Activated B cell treated with CpG ODN at 0.5 μM for 24 hours (primary cell): ENCODE measurements at regions of chrX and their contacts with region 1.

Region 1: DNA sequence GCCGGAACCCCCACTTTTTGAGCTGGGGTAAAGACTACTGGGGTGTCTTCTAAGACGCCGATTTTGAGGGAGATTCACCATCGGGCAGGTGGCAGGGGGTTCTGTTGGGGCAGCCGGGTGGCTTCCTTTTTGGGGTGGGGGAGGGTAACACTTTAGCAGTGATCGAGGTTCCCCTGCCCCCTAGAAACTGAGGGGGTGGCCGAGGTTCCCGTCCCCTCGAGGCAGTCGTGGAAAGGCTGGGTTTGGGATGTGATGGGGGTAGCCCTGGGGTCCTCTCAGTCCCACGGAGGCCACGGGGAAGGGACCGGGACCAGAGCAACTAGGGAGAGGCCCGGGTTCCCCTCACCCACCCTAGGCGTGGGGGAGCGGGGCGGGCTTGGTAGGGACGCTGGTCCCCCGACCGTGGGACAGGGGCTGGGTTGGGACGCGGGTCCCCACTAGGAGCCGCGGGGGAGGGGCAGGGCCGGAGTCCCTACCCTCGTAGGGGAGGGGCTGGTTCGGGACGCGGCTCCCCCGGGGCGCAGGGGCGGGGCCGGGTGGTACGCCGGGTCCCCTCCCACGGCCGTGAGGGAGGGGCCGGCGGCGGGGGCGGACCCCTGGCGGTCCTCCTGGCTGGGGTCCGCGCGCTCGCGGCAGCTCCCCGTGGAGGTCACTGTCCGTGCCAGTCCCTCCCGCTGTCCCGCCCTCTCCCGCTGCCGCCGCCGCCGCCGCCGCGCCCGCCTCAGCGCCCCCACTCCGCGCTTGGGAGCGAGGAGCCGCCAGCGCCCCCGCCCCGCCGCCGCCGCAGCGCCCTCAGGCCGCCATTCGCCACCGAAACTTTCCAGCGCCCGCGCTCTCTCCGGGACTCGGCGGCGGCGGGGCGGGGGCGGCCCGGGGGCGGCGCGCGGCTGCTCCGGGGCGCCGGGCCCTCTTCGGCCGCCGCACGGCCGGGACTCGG is at the start of gene TBL1X:
- DNase-seq: peak; percentile 66
- ATAC-seq: peak; percentile 70
- H3K4me3 Mint-ChIP-seq: peak within 1 kb of the TSS; percentile 78
- H3K27ac Mint-ChIP-seq: peak within 1 kb of the TSS; percentile 86
- H3K4me1 Mint-ChIP-seq: peaks cover 48% of the 10 kb centered on the region
- H3K27me3 Mint-ChIP-seq: no peaks in the 10 kb centered on the region
- CTCF ChIP-seq: no peak
- total RNA-seq, gene TBL1X: 37.6 and 38.5 TPM in 2 replicates

Region 2: GRCh38 chrX:9091258-9091657 is 373.4 kb before region 1 on chrX:
- CTCF ChIA-PET with region 1: no interaction called
- POLR2A ChIA-PET with region 1: no interaction called
- intact Hi-C with region 1: loop called (anchors 5 kb)
- DNase-seq: peak; percentile 15
- ATAC-seq: peak; percentile 42
- H3K4me3 Mint-ChIP-seq: peak overlapping the region; percentile 15
- H3K27ac Mint-ChIP-seq: peak overlapping the region; percentile 65
- H3K4me1 Mint-ChIP-seq: peaks cover 13% of the 10 kb centered on the region
- H3K27me3 Mint-ChIP-seq: peaks cover 4% of the 10 kb centered on the region
- CTCF ChIP-seq: no peak

Region 3: DNA sequence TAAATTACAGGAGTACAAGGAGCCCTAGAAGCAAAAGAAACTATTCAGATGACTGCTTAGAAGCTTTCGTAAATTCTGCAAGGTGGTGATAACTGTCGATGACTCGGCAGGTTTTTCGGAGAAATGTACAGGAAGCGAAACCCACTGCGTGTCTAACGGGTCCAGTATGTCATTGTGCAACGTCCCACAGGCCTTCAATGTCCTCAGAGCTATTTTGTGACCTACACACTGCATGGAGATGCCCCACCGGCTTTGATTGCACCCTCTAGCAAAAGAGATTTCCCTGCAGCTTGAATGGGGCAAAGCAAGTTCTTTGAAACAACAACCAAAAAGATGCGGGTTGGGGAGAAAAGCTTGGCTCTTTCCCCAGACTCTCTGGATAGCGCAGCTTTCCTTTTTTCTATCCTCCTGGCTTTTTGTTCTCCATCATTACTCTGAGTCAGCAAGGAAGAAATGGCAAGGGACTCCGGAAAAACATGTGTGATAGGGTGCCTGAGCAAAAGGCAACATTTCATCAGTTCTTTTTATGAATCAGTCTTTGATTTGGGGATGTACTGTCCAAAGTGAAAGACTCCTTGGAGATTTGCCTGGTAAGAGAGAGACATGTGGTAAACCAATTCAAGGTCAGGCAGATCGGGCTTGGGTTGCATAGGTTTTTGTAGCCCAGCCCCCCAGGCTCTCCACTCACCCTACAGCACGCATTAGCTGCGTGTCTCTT is 111.8 kb before region 1 on chrX:
- CTCF ChIA-PET with region 1: no interaction called
- POLR2A ChIA-PET with region 1: interaction called, 5 read pairs
- intact Hi-C with region 1: loop called (anchors 2 kb)
- DNase-seq: no peak
- ATAC-seq: peak; percentile 71
- H3K4me3 Mint-ChIP-seq: peak overlapping the region; percentile 70
- H3K27ac Mint-ChIP-seq: peak overlapping the region; percentile 80
- H3K4me1 Mint-ChIP-seq: peaks cover 27% of the 10 kb centered on the region
- H3K27me3 Mint-ChIP-seq: no peaks in the 10 kb centered on the region
- CTCF ChIP-seq: no peak

Region 4: DNA sequence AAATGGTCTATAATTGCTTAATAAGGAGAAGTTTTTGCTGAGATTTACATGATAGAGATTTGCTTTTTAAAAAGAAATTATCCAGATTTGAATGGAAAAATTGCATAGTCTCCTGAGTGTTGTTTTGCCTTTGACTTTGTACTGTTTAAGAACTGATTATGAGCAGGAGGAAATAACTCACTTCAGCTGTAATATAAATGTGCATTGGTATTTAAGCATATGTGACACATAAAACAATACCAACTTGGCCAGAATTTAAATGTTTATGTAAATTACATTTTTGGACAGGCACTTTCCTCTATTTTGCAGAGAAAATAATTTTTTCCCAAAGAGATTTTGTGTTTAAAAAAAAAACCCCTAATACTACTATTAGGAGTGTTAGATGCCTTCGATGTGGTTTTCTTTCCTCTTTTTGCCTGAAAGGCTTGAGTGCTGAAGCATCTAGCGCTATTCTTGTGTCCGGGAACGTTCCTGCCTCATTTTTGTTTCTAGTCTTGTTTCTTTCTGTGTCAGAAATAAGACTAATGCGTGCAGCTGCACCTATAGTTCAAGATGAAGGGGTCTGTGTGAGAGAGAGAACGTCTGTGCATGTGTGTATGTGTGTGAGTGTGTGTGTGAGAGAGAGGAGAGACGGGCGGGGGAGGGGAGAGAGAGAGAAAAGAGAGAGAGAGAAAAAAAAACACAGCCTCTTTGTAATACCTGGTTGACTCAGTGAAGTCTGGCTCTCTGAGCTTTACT is 61.0 kb after region 1 on chrX:
- CTCF ChIA-PET with region 1: no interaction called
- POLR2A ChIA-PET with region 1: interaction called, 4 read pairs
- intact Hi-C with region 1: loop called (anchors 1 kb)
- DNase-seq: no peak
- ATAC-seq: peak; percentile 54
- H3K4me3 Mint-ChIP-seq: peak overlapping the region; percentile 65
- H3K27ac Mint-ChIP-seq: peak overlapping the region; percentile 63
- H3K4me1 Mint-ChIP-seq: peaks cover 64% of the 10 kb centered on the region
- H3K27me3 Mint-ChIP-seq: no peaks in the 10 kb centered on the region
- CTCF ChIP-seq: no peak

Region 5: DNA sequence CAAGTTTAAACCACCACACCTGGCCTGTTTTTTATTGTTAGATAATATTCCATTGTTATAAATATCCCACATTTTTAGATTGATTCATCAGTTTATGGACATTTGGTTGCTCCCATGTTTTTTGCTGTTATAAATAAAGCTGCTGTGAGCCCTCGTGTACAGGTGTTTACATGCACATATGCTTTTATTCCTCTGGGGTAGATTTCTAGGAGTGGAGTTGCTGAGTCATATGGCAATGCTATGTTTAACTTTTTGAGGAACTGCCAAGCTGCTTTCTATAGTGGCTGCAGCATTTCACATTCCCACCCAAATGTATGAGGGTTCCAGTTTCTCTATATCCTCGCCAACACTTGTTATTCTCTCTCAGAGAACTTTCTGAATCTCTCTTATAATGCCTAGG is 90.7 kb after region 1 on chrX:
- CTCF ChIA-PET with region 1: no interaction called
- POLR2A ChIA-PET with region 1: no interaction called
- intact Hi-C with region 1: no loop called
- DNase-seq: no peak
- ATAC-seq: no peak
- H3K4me3 Mint-ChIP-seq: no peak overlapping the region
- H3K27ac Mint-ChIP-seq: no peak overlapping the region
- H3K4me1 Mint-ChIP-seq: peaks cover 38% of the 10 kb centered on the region
- H3K27me3 Mint-ChIP-seq: no peaks in the 10 kb centered on the region
- CTCF ChIP-seq: no peak

Region 6: DNA sequence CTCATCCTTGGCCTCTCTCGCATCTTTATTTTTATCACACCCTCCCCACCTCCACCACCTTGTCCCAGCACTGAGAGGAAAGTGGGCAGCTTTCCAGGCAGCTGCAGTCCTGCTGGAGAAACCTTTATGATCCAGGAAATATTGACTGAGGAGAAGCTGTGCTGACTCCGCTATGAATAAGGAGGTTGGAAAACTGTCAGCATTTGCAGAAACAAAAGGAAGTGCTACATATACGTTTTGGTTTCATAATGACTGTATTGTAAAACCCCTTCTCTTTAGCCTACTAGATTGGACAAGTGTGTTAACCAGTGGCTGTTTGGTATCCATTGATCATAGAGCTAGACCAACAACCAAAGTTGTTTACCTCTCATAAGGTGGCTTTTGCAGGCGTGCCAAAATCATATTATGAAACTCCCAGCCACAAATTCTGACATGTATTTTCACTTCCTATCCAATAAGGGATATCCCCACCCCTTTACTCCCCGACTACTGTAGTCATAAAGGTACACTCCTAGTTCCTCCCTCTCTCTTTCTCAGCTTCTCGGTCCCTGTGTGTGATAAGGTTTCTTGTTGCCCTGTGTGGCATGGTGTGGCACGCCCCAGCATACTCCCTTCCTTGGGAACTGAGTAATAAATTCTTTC is 212.5 kb after region 1 on chrX:
- CTCF ChIA-PET with region 1: no interaction called
- POLR2A ChIA-PET with region 1: interaction called, 12 read pairs
- intact Hi-C with region 1: loop called (anchors 1 kb)
- DNase-seq: no peak
- ATAC-seq: peak; percentile 89
- H3K4me3 Mint-ChIP-seq: peak overlapping the region; percentile 58
- H3K27ac Mint-ChIP-seq: peak overlapping the region; percentile 89
- H3K4me1 Mint-ChIP-seq: peaks cover 50% of the 10 kb centered on the region
- H3K27me3 Mint-ChIP-seq: no peaks in the 10 kb centered on the region
- CTCF ChIP-seq: no peak